ENCODE measurements at regions of chr10 and their contacts with region 1.

Region 1: DNA sequence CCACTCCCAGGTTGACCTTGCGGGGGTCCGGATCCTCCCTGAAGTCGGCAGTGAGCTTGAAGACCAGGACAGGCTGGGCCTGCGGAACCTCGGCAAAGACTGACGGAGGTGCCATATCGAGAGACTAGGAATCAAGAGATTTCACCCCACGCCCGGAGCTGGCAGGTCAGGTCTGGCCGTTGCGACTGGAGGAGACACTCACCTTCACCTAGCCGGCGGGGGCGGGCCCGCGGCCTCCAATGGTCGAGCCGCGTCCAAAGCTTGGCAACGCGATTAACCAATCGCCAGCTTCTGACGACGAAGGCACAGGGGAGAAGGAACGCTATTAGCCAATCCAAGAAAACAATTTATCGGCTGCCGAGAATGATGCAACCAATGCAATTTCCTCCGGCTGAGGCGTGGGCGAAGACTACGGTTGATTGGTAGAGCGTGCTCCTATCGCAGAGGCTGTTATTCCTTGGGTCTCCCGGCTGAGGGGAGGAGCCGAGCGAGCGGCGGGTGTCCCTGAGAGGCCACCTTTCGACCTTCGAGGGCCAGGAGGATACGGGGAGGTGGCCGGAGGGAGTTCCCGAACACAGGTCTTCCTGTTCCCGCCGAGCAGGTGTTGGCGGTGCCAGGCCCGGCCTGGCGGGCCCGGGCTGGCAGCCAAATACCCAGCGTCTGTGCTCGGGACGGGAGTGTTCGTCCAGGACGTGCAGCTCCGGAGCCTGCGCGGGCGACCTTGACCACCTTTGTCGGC is at the start of gene GOT1:
- DNase-seq: peak; percentile 97
- total RNA-seq, gene GOT1: 390 TPM

Region 2: GRCh38 chr10:99394761-99395386 is 35.7 kb before region 1 on chr10:
- intact Hi-C with region 1: loop called (anchors 5 kb)
- DNase-seq: no peak